Activated naive CD4-positive, alpha-beta T cell treated with anti-CD3 and anti-CD28 coated beads for 36 hours (primary cell): ENCODE measurements at regions of chr2 and their contacts with region 1.

Region 1: DNA sequence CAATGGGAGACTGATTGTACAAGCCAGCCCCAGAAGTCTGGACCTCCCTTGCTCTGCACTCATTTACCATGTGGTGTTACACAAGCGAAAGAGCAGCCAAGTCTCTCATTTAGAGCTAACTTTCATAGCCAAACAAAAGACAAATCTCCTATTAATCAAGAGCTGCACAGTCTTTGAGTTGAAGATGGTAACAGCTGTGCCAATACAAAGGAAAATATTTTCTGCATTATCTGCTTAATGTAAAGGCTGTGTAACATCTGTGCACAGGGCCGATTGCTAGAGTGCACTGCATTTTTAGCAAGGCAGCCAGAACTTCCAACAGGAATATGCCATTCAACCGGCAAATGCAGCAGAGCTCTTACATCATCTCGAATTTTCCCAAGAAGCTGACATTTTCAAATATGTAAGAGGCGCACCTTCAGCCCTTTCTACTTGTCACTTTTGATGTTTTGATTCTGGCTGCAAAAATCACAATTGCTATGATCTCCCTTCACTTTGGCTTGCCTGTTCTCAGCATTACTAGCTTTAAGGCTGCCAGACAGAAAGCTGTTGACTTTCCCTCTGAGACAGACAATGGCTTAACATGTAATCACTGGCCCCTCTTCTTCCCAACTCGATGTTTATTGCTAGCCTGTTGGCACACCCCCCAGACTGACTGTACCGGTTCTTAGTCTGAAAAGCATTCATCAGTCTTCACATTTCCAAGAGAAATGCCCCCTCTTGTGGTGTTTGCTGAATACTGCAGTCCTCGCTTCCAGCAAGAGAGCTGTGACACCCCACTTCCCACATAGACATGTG is 96.9 kb upstream of the TANK start:
- DNase-seq: peak; percentile 81
- H3K4me3 Mint-ChIP-seq: no peak overlapping the region
- H3K27ac Mint-ChIP-seq: no peak overlapping the region
- H3K4me1 Mint-ChIP-seq: peaks cover 9% of the 10 kb centered on the region
- H3K27me3 Mint-ChIP-seq: peaks cover 5% of the 10 kb centered on the region

Region 2: GRCh38 chr2:161004379-161004778 is 59.0 kb before region 1 on chr2:
- CTCF ChIA-PET with region 1: interaction called, 16 read pairs
- intact Hi-C with region 1: no loop called
- DNase-seq: no peak
- H3K4me3 Mint-ChIP-seq: no peak overlapping the region
- H3K27ac Mint-ChIP-seq: no peak overlapping the region
- H3K4me1 Mint-ChIP-seq: no peaks in the 10 kb centered on the region
- H3K27me3 Mint-ChIP-seq: peaks cover 13% of the 10 kb centered on the region

Region 3: GRCh38 chr2:161052214-161052613 is 11.1 kb before region 1 on chr2:
- CTCF ChIA-PET with region 1: interaction called, 14 read pairs
- intact Hi-C with region 1: no loop called
- DNase-seq: no peak
- H3K4me3 Mint-ChIP-seq: no peak overlapping the region
- H3K27ac Mint-ChIP-seq: no peak overlapping the region
- H3K4me1 Mint-ChIP-seq: no peaks in the 10 kb centered on the region
- H3K27me3 Mint-ChIP-seq: peaks cover 23% of the 10 kb centered on the region

Region 4: GRCh38 chr2:161146209-161146775 is 82.9 kb after region 1 on chr2:
- CTCF ChIA-PET with region 1: no interaction called
- intact Hi-C with region 1: no loop called
- DNase-seq: no peak
- H3K4me3 Mint-ChIP-seq: no peak overlapping the region
- H3K27ac Mint-ChIP-seq: no peak overlapping the region
- H3K4me1 Mint-ChIP-seq: peaks cover 59% of the 10 kb centered on the region
- H3K27me3 Mint-ChIP-seq: no peaks in the 10 kb centered on the region

Region 5: GRCh38 chr2:161217597-161218185 is 154.3 kb after region 1 on chr2:
- CTCF ChIA-PET with region 1: interaction called, 11 read pairs
- intact Hi-C with region 1: no loop called
- DNase-seq: no peak
- H3K4me3 Mint-ChIP-seq: no peak overlapping the region
- H3K27ac Mint-ChIP-seq: no peak overlapping the region
- H3K4me1 Mint-ChIP-seq: peaks cover 23% of the 10 kb centered on the region
- H3K27me3 Mint-ChIP-seq: no peaks in the 10 kb centered on the region

Region 6: DNA sequence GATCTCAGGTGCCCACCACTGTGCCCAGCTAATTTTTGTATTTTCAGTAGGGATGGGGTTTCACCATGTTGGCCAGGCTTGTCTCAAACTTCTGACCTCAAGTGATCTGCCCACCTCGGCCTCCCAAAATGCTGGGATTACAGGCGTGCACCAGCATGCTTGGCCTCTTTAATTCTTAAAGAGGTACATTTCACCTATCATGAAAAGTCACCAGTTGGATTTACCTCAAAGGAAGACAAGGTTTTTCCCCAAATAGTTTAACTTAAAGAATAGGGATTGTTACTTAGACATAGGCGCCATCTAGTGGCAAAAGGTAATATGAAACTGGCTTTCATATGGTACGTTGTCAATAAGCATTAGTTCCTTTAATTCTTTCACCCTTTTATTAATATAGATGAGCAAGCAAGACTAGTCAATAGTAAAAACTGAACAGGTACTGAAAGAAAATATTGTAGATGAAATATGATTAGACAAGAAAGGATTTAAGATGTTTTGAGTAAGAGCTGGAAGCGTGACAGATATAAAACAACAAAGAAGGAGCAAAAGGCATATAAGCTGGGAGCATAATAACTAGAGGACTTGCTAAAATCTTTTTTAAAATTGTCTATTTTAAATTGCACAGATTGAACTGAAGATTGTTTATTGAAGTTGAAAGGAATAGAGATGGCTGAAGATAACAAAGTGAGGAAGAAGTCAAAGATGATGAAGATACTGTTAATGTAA is 209.8 kb after region 1 on chr2:
- CTCF ChIA-PET with region 1: interaction called, 18 read pairs
- intact Hi-C with region 1: loop called (anchors 1 kb)
- DNase-seq: peak; percentile 37
- H3K4me3 Mint-ChIP-seq: no peak overlapping the region
- H3K27ac Mint-ChIP-seq: no peak overlapping the region
- H3K4me1 Mint-ChIP-seq: peaks cover 3% of the 10 kb centered on the region
- H3K27me3 Mint-ChIP-seq: peaks cover 2% of the 10 kb centered on the region